Adrenal gland (tissue), 19 donors: ENCODE measurements at regions of chr22 and their contacts with region 1.

Region 1: DNA sequence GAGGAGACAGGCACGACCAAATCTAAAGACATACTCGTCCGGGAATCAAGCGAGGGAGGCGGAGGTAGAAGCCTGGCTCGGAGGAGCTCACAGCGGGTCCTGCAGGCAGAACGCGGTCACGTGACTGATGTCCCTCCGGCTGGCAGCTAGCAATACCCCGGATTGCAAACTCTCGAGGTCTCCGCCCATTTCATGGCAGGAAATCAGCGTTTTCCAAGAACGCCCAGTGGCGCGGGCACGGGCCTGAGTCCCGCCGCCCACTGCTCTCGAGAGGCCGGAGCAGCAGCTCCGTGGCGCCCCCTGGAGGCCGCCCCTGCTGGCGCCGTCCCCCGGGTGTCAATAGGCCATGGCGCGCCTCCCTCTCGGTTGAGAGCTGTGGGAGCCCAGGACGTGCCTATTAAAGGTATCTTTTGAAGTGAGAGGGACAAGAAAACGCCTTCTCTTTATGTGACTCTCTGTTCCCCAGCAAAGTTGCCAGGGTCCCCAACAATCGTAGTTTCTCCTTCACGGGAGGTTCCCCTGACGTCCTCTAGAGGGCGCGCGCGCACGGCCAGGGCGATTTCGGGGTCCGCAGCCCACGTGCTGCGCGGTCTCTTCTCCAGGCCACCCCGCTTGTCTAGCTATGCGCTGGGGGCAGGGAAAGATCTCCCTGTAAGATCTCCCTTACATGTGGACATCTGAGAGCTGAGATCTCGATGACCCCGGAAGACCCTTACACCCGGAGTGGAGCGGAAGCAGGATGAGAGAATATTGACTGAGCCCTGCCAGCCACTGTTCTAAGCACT is 37.3 kb upstream of the RBFOX2 start:
- DNase-seq: peak; percentile 92 to 97 (median 96)
- H3K4me3 ChIP-seq: peak overlapping the region in 2 of 4 donors; percentile 48 to 62
- H3K27ac ChIP-seq: peak overlapping the region; percentile 58 to 90 (median 67)
- H3K4me1 ChIP-seq: peaks cover 0 to 10% of the 10 kb centered on the region in 2 donors
- H3K27me3 ChIP-seq: no peaks in the 10 kb centered on the region
- CTCF ChIP-seq: peak; percentile 97 to 100 (median 100)
- POLR2A ChIP-seq: peak in 1 of 2 donors; percentile 54

Region 2: GRCh38 chr22:35894937-35895708 is 170.8 kb before region 1 on chr22:
- intact Hi-C with region 1: no loop called
- DNase-seq: peak in 6 of 7 donors; percentile 36 to 69 (median 52)
- H3K4me3 ChIP-seq: peak overlapping the region in 1 of 4 donors; percentile 9
- H3K27ac ChIP-seq: peak overlapping the region in 1 of 5 donors; percentile 5
- H3K4me1 ChIP-seq: peaks cover 7 to 41% of the 10 kb centered on the region in 2 donors
- H3K27me3 ChIP-seq: no peaks in the 10 kb centered on the region
- CTCF ChIP-seq: no peak
- POLR2A ChIP-seq: no peak

Region 3: DNA sequence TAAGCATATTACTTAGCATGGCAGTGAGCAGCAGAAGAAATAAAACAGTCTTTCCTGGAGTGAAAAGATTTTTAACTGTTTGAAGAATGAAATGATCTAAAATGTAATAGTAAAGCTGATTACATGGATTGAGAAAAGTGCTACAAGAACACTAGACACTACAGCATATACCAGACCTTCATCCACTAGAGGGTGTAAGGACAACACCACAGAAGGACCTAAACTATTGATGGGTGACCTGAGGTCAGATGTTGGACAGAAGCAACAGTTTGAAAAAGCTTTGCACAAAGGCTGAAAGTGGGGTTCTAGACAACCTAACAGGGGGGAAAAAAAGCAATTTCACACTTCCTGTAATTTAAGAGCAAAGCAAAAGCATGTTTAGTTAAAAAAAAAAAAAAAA is 135.0 kb before region 1 on chr22:
- intact Hi-C with region 1: loop called (anchors 5 kb)
- DNase-seq: peak in 4 of 7 donors; percentile 33 to 43 (median 38)
- H3K4me3 ChIP-seq: no peak overlapping the region
- H3K27ac ChIP-seq: no peak overlapping the region
- H3K4me1 ChIP-seq: no peaks in the 10 kb centered on the region
- H3K27me3 ChIP-seq: no peaks in the 10 kb centered on the region
- CTCF ChIP-seq: peak; percentile 43 to 91 (median 80)
- POLR2A ChIP-seq: no peak

Region 4: DNA sequence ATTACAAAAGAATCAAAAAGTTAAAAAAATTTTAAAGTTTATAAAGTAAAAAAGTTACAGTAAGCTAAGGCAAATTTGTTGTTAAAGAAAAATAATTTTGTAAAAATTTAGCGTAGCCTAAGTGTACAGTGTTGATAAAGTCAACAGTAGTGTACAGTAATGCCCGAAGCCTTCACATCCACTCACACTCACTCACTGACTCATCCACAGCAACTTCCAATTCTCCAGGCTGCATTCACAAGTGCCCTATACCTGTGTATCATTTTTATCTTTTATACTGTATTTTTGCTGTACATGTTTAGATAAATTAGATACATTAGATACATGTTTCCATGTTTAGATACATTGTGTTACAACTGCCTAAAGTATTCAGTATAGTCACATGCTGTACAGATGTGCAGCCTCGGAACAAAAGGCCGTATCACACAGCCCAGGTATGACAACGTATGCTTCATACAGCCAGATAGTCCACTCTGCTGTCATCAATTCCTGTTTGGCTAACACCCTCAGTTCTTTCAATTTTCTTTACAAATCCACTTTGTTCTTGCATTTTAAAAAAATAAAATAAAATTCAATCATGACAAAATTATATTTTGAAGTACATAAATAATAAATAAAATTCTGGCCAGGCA is 118.1 kb before region 1 on chr22:
- intact Hi-C with region 1: no loop called
- DNase-seq: no peak
- H3K4me3 ChIP-seq: no peak overlapping the region
- H3K27ac ChIP-seq: no peak overlapping the region
- H3K4me1 ChIP-seq: no peaks in the 10 kb centered on the region
- H3K27me3 ChIP-seq: no peaks in the 10 kb centered on the region
- CTCF ChIP-seq: no peak
- POLR2A ChIP-seq: no peak

Region 5: GRCh38 chr22:36123673-36124630 is 58.0 kb after region 1 on chr22:
- intact Hi-C with region 1: loop called in 1 of 2 experiments (anchors 10 kb)
- DNase-seq: peak; percentile 94 to 98 (median 96)
- H3K4me3 ChIP-seq: peak overlapping the region in 1 of 4 donors; percentile 19
- H3K27ac ChIP-seq: peak overlapping the region; percentile 33 to 93 (median 70)
- H3K4me1 ChIP-seq: peaks cover 0 to 4% of the 10 kb centered on the region in 2 donors
- H3K27me3 ChIP-seq: no peaks in the 10 kb centered on the region
- CTCF ChIP-seq: peak; percentile 98 to 99 (median 98)
- POLR2A ChIP-seq: peak in 1 of 2 donors; percentile 44